ENCODE measurements at regions of chr12 and their contacts with region 1.

Region 1: DNA sequence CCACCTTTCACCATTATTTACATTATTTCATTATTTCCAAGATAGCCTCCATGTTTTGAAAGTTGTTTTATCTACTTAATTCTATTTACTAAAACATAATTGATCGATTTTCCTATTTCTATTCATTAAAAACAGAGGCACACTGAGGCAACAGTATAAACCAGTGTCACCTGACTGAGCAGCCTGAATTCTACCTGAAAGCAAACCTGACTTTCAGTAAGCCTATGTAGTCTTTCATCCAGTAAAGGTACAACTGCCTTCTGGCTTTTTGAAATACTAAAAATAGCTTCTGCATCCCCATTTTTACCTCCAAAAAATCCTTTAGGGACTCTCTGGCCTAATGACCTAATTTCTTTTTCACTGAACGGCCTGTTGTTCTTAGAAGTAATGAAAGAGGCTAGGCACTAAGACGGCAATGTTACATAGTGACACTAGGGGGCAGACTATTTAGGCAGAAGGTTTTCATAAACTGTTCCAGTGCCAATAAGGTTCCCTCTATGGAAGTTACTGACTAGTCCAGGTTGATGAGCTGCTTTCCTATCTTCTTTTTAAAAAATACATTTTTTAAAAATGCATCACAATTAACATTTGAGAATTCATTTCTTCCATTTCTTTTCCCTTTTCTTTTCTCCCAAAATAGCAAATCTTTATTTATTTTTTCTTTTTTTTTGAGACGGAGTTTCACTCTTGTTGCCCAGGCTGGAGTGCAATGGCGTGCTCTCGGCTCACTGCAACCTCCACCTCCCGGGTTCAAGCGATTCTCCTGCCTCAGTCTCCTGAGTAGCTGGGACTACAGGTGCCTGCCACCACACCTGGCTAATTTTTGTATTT is 17.5 kb downstream of the ANAPC5 start:
- DNase-seq: peak; percentile 70
- ATAC-seq: peak; percentile 73
- H3K4me3 ChIP-seq: no peak overlapping the region
- H3K4me3 Mint-ChIP-seq: no peak overlapping the region
- H3K27ac ChIP-seq: no peak overlapping the region
- H3K27ac Mint-ChIP-seq: no peak overlapping the region
- H3K4me1 ChIP-seq: no peaks in the 10 kb centered on the region
- H3K4me1 Mint-ChIP-seq: peaks cover 3% of the 10 kb centered on the region
- H3K27me3 ChIP-seq: no peaks in the 10 kb centered on the region
- H3K27me3 Mint-ChIP-seq: no peaks in the 10 kb centered on the region
- CTCF ChIP-seq: peak; percentile 92

Region 2: GRCh38 chr12:120884644-120885043 is 450.1 kb before region 1 on chr12:
- CTCF ChIA-PET with region 1: no interaction called
- POLR2A ChIA-PET with region 1: no interaction called
- intact Hi-C with region 1: no loop called
- DNase-seq: no peak
- ATAC-seq: no peak
- H3K4me3 ChIP-seq: no peak overlapping the region
- H3K4me3 Mint-ChIP-seq: no peak overlapping the region
- H3K27ac ChIP-seq: peak overlapping the region in 1 of 2 donors; percentile 67
- H3K27ac Mint-ChIP-seq: no peak overlapping the region
- H3K4me1 ChIP-seq: peaks cover 28 to 36% of the 10 kb centered on the region in 2 donors
- H3K4me1 Mint-ChIP-seq: peaks cover 63% of the 10 kb centered on the region
- H3K27me3 ChIP-seq: no peaks in the 10 kb centered on the region
- H3K27me3 Mint-ChIP-seq: no peaks in the 10 kb centered on the region
- CTCF ChIP-seq: no peak

Region 3: DNA sequence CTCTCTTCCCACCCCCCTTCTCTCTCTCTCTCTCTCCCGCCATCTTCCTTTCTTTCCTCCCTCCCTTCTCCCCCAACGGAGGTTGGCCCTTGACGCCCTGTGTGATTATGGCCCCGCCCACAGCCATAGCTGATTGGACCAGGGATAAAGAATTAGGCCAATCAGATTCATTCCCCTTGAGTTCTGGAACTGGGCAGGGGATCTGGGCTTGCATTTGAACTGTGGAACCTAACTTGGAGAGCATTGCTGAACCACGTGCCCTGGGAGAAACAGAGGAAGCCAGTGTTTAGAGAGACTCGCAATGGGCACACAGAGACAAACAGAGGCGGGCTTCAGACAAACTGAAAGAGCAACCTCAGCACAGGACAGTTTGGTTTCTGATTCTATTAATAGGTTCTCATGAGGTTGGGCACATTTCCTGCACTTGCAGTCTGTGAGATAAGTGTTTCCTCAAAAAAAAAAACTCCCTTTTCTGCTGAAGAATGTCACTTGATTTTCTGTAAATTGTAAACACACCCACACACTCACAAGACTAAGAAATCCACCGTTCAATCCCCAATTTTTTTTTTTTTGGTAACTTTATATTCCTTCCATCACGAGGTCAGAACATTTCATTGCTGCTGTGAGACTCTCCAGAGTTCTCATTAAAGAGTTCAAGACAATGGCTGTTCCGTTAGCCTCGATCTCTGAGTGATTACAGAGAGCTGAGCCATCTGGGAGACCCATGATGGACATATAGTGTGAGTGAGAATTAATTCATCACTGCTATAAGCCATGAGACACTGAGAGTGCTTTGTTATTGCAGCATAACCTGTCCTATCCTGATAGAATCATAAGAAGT is 205.5 kb before region 1 on chr12:
- CTCF ChIA-PET with region 1: no interaction called
- POLR2A ChIA-PET with region 1: no interaction called
- intact Hi-C with region 1: no loop called
- DNase-seq: peak; percentile 91
- ATAC-seq: peak; percentile 86
- H3K4me3 ChIP-seq: peak overlapping the region; percentile 21 to 66 (median 30)
- H3K4me3 Mint-ChIP-seq: peak overlapping the region; percentile 82
- H3K27ac ChIP-seq: peak overlapping the region; percentile 91
- H3K27ac Mint-ChIP-seq: peak overlapping the region; percentile 92
- H3K4me1 ChIP-seq: peaks cover 42 to 50% of the 10 kb centered on the region in 2 donors
- H3K4me1 Mint-ChIP-seq: peaks cover 64% of the 10 kb centered on the region
- H3K27me3 ChIP-seq: no peaks in the 10 kb centered on the region
- H3K27me3 Mint-ChIP-seq: no peaks in the 10 kb centered on the region
- CTCF ChIP-seq: no peak

Region 4: DNA sequence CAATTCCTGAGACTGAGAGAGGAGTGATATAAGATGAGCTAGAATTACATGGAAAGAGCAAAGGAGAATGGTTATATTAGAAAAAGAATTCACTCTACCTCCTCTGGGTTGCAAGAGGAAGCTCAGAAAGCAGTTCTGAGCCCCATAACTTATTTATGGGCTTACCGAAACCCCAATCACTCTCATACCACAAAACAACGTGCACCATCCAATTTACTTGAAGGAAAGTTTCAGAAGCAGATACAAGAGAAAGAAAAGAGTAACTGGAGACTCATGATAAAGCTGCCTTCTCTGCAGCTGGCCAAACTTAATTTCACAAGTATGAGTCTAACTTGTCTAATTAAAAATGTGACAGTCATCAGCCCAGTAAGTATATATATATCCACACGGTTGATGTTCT is 10.8 kb before region 1 on chr12:
- CTCF ChIA-PET with region 1: interaction called, 20 read pairs
- POLR2A ChIA-PET with region 1: no interaction called
- intact Hi-C with region 1: no loop called
- DNase-seq: no peak
- ATAC-seq: no peak
- H3K4me3 ChIP-seq: no peak overlapping the region
- H3K4me3 Mint-ChIP-seq: no peak overlapping the region
- H3K27ac ChIP-seq: no peak overlapping the region
- H3K27ac Mint-ChIP-seq: no peak overlapping the region
- H3K4me1 ChIP-seq: no peaks in the 10 kb centered on the region
- H3K4me1 Mint-ChIP-seq: no peaks in the 10 kb centered on the region
- H3K27me3 ChIP-seq: no peaks in the 10 kb centered on the region
- H3K27me3 Mint-ChIP-seq: no peaks in the 10 kb centered on the region
- CTCF ChIP-seq: no peak

Region 5: GRCh38 chr12:121399391-121400331 is 64.9 kb after region 1 on chr12 and contains the start of gene RNF34:
- CTCF ChIA-PET with region 1: interaction called, 6 read pairs
- POLR2A ChIA-PET with region 1: no interaction called
- intact Hi-C with region 1: loop called (anchors 2 kb)
- DNase-seq: peak; percentile 99
- ATAC-seq: peak; percentile 94
- H3K4me3 ChIP-seq: peak within 1 kb of the TSS; percentile 79 to 96 (median 82)
- H3K4me3 Mint-ChIP-seq: peak within 1 kb of the TSS; percentile 93
- H3K27ac ChIP-seq: peak within 1 kb of the TSS; percentile 76 to 89
- H3K27ac Mint-ChIP-seq: peak within 1 kb of the TSS; percentile 99
- H3K4me1 ChIP-seq: peaks cover 24 to 25% of the 10 kb centered on the region in 2 donors
- H3K4me1 Mint-ChIP-seq: peaks cover 31% of the 10 kb centered on the region
- H3K27me3 ChIP-seq: no peaks in the 10 kb centered on the region
- H3K27me3 Mint-ChIP-seq: no peaks in the 10 kb centered on the region
- CTCF ChIP-seq: no peak
- total RNA-seq, gene RNF34: 79.6 and 86.7 TPM in 2 replicates

Region 6: DNA sequence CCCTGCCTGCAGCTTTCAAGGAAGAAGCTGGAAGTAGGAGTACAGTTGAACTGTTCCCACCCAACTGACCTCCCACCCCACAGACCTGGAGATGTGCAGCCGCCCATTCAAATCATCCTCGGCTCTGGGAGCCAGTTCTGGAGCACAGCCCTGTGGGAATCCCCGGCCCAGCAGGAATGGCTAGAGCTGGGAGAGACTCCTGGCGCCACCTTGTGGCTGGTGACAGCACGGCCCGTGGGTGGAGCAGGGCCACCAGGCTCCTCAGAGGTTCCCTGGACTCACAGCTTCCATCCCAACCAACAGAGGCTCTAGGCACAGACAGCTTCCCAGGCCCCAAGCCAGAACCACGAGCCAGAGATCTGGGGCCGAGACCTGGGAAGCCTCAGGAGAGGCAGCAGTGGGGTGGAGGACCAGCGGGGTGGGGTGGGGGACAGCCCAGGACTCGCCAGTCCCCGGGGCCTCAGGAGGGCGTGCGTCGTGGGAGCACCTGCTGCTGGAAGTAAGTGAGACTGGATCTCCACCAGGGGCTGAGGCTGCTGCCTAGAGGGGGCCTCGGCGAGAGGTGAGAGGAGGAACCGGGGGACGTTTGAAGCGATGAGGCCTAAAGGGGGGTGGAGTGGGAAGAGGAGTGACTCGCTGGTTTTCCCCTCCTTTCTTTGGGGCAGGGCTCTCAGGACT is 108.6 kb after region 1 on chr12:
- CTCF ChIA-PET with region 1: interaction called, 115 read pairs
- POLR2A ChIA-PET with region 1: no interaction called
- intact Hi-C with region 1: no loop called
- DNase-seq: peak; percentile 70
- ATAC-seq: peak; percentile 66
- H3K4me3 ChIP-seq: no peak overlapping the region
- H3K4me3 Mint-ChIP-seq: no peak overlapping the region
- H3K27ac ChIP-seq: no peak overlapping the region
- H3K27ac Mint-ChIP-seq: no peak overlapping the region
- H3K4me1 ChIP-seq: no peaks in the 10 kb centered on the region
- H3K4me1 Mint-ChIP-seq: peaks cover 5% of the 10 kb centered on the region
- H3K27me3 ChIP-seq: no peaks in the 10 kb centered on the region
- H3K27me3 Mint-ChIP-seq: no peaks in the 10 kb centered on the region
- CTCF ChIP-seq: peak; percentile 84

Region 7: GRCh38 chr12:121579981-121580868 is 245.5 kb after region 1 on chr12:
- CTCF ChIA-PET with region 1: no interaction called
- POLR2A ChIA-PET with region 1: no interaction called
- intact Hi-C with region 1: no loop called
- DNase-seq: peak; percentile 79
- ATAC-seq: peak; percentile 55
- H3K4me3 ChIP-seq: peak overlapping the region; percentile 57 to 93 (median 65)
- H3K4me3 Mint-ChIP-seq: peak overlapping the region; percentile 94
- H3K27ac ChIP-seq: peak overlapping the region; percentile 69 to 77
- H3K27ac Mint-ChIP-seq: peak overlapping the region; percentile 94
- H3K4me1 ChIP-seq: peaks cover 23 to 47% of the 10 kb centered on the region in 2 donors
- H3K4me1 Mint-ChIP-seq: peaks cover 34% of the 10 kb centered on the region
- H3K27me3 ChIP-seq: no peaks in the 10 kb centered on the region
- H3K27me3 Mint-ChIP-seq: no peaks in the 10 kb centered on the region
- CTCF ChIP-seq: no peak

Region 8: DNA sequence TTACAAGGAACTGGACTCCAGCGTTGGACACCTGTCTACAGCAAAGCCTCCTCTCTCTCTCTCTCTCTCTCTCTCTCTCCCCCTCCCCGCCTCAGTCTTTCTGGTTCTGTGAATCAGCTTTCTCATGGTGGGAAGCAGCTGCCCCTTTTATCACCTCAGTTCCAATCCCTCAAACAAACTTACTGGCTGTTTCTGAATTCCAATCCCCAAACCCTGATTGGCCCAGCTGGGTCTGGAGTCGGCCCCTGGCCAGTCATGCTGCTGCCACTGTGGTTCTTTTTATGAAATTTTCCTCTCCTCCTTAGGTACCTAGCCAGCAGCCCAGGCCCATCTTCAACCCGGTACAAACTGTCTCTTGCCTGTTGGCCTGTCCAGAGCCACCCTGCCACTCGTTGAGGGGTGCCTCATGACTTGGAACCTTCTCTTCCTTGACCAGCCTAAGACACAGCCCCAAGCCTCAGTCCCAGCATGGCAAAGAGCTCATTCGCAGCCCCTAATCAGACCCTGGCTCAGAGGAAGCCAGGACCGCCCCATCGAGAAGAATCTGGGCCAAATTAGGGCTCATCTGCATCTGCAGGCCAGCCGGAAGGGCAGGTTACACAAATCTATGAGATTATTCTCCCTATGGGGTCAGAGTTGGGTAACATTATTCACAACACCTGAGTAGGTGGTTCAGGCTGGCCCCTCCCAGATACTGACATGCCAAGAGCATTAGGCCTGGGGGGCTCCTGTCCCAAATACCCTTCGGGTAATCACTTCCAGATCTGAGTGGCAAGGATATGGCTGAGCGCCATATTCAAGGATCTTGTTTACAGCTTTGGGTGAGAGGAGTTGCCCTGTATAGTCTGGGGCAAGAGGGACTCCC is 344.2 kb after region 1 on chr12:
- CTCF ChIA-PET with region 1: interaction called, 7 read pairs
- POLR2A ChIA-PET with region 1: no interaction called
- intact Hi-C with region 1: loop called (anchors 1 kb)
- DNase-seq: no peak
- ATAC-seq: no peak
- H3K4me3 ChIP-seq: no peak overlapping the region
- H3K4me3 Mint-ChIP-seq: no peak overlapping the region
- H3K27ac ChIP-seq: no peak overlapping the region
- H3K27ac Mint-ChIP-seq: peak overlapping the region; percentile 65
- H3K4me1 ChIP-seq: peaks cover 0 to 3% of the 10 kb centered on the region in 2 donors
- H3K4me1 Mint-ChIP-seq: peaks cover 2% of the 10 kb centered on the region
- H3K27me3 ChIP-seq: no peaks in the 10 kb centered on the region
- H3K27me3 Mint-ChIP-seq: no peaks in the 10 kb centered on the region
- CTCF ChIP-seq: no peak